Panc1 (cell line): ENCODE measurements at regions of chr11 and their contacts with region 1.

Region 1: GRCh38 chr11:33525789-33526188 is 174.8 kb downstream of the C11orf91 start:
- DNase-seq: no peak
- ATAC-seq: no peak
- H3K4me3 ChIP-seq: no peak overlapping the region
- H3K27ac ChIP-seq: no peak overlapping the region
- H3K4me1 ChIP-seq: no peaks in the 10 kb centered on the region
- H3K27me3 ChIP-seq: no peaks in the 10 kb centered on the region
- CTCF ChIP-seq: no peak

Region 2: GRCh38 chr11:33682446-33682845 is 156.7 kb after region 1 on chr11:
- CTCF ChIA-PET with region 1: no interaction called
- POLR2A ChIA-PET with region 1: no interaction called
- in situ Hi-C with region 1: no loop called
- intact Hi-C with region 1: no loop called
- DNase-seq: no peak
- ATAC-seq: 0 out of 2 replicates have a peak, but pooled peaks have one; percentile 45
- H3K4me3 ChIP-seq: no peak overlapping the region
- H3K27ac ChIP-seq: 0 out of 2 replicates have a peak overlapping the region, but pooled peaks have one; percentile 35
- H3K4me1 ChIP-seq: no peaks in the 10 kb centered on the region
- H3K27me3 ChIP-seq: no peaks in the 10 kb centered on the region
- CTCF ChIP-seq: no peak; the same call in 1 of the 2 replicates

Region 3: DNA sequence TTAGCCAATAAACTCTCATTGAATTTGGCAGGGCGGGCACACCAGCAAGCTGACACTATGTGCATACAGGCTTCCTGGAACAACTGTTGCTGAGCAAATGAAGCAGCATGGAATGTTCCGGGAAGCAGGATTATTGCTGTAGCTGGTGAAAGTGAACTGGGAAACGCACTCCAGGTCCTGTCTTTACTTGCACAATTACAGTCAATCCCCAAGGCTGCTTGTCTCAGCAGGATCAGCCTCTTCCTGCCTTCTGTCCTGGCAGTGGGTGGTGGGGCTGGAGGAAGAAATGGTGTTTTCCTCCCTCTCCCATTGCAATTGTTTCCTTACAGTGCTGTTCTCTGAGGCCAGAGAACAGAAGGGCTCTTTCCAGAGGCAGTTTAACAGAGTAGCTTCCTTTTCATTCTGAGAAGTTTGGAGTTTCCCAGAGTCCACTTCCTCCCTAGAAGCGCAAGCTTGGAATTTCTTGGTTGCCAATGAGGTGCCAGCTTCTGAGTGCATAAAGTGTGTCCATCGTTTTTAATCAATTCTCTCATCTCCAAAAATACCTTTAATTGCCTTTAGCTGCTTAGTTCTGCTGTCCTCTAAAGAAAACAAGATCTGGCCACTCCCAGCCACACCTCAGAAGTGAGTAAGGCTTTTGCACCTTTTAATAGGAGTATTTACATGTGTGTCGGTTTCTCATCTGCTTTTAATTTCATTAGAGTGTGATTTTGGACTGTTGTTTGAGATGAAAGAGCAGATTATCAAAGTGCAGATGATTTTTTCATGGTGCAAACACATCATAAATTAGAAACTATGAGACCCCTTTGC is 1633.1 kb after region 1 on chr11:
- CTCF ChIA-PET with region 1: no interaction called
- POLR2A ChIA-PET with region 1: interaction called, 10 read pairs
- in situ Hi-C with region 1: no loop called
- intact Hi-C with region 1: no loop called
- DNase-seq: no peak
- ATAC-seq: 0 out of 2 replicates have a peak, but pooled peaks have one; percentile 6
- H3K4me3 ChIP-seq: peak overlapping the region in 1 of 2 experiments; percentile 21; a peak in 2 of 4 replicates
- H3K27ac ChIP-seq: peak overlapping the region; percentile 99
- H3K4me1 ChIP-seq: peaks cover 100% of the 10 kb centered on the region
- H3K27me3 ChIP-seq: no peaks in the 10 kb centered on the region
- CTCF ChIP-seq: no peak